H1 (cell line): ENCODE measurements at regions of chr3 and their contacts with region 1.

Region 1: GRCh38 chr3:46923559-46924350 is 46.2 kb downstream of the PTH1R start:
- DNase-seq: peak in 1 of 2 experiments; percentile 75
- H3K4me3 ChIP-seq: no peak overlapping the region
- H3K27ac ChIP-seq: no peak overlapping the region; the same call in 1 of the 2 replicates
- H3K4me1 ChIP-seq: no peaks in the 10 kb centered on the region
- H3K27me3 ChIP-seq: no peaks in the 10 kb centered on the region
- CTCF ChIP-seq: peak; percentile 65 to 79 (median 72)
- EP300 ChIP-seq: no peak
- POLR2A ChIP-seq: no peak
- RAD21 ChIP-seq: peak; percentile 74 to 77

Region 2: GRCh38 chr3:46935168-46935858 is 11.6 kb after region 1 on chr3:
- CTCF ChIA-PET with region 1: interaction called, 99 read pairs
- POLR2A ChIA-PET with region 1: interaction called, 4 read pairs
- DNase-seq: peak in 1 of 2 experiments; percentile 64
- H3K4me3 ChIP-seq: 0 out of 8 replicates have a peak overlapping the region, but pooled peaks of 1 of the 4 experiments have one; percentile 17
- H3K27ac ChIP-seq: peak overlapping the region; percentile 53; the same call in 1 of the 2 replicates
- H3K4me1 ChIP-seq: peaks cover 4 to 14% (median 10%) of the 10 kb centered on the region in 4 experiments; a peak in 6 of 7 replicates
- H3K27me3 ChIP-seq: no peaks in the 10 kb centered on the region
- CTCF ChIP-seq: peak; percentile 52 to 72 (median 60)
- EP300 ChIP-seq: no peak
- POLR2A ChIP-seq: no peak
- RAD21 ChIP-seq: peak; percentile 40 to 47

Region 3: GRCh38 chr3:46970391-46971091 is 46.8 kb after region 1 on chr3:
- CTCF ChIA-PET with region 1: interaction called, 15 read pairs
- POLR2A ChIA-PET with region 1: interaction called, 8 read pairs
- DNase-seq: no peak
- H3K4me3 ChIP-seq: no peak overlapping the region
- H3K27ac ChIP-seq: no peak overlapping the region
- H3K4me1 ChIP-seq: 0 out of 7 replicates have a peak, but pooled peaks cover 0 to 2% (median 0%) of the 10 kb centered on the region in 4 experiments
- H3K27me3 ChIP-seq: no peaks in the 10 kb centered on the region
- CTCF ChIP-seq: no peak
- EP300 ChIP-seq: no peak
- POLR2A ChIP-seq: no peak
- RAD21 ChIP-seq: no peak

Region 4: GRCh38 chr3:46981932-46982471 is 58.2 kb after region 1 on chr3:
- CTCF ChIA-PET with region 1: interaction called, 15 read pairs
- POLR2A ChIA-PET with region 1: no interaction called
- DNase-seq: no peak
- H3K4me3 ChIP-seq: peak overlapping the region in 3 of 4 experiments; percentile 3 to 22 (median 7); a peak in 3 of 8 replicates
- H3K27ac ChIP-seq: no peak overlapping the region
- H3K4me1 ChIP-seq: peaks cover 3 to 27% (median 17%) of the 10 kb centered on the region in 4 experiments
- H3K27me3 ChIP-seq: peaks cover 0 to 13% (median 3%) of the 10 kb centered on the region in 4 experiments; a peak in 3 of 7 replicates
- CTCF ChIP-seq: no peak
- EP300 ChIP-seq: peak in 1 of 2 experiments; percentile 65; a peak in 1 of 3 replicates
- POLR2A ChIP-seq: no peak
- RAD21 ChIP-seq: peak in 1 of 2 experiments; percentile 2; a peak in 1 of 4 replicates

Region 5: GRCh38 chr3:47227678-47228077 is 303.9 kb after region 1 on chr3:
- CTCF ChIA-PET with region 1: no interaction called
- POLR2A ChIA-PET with region 1: no interaction called
- DNase-seq: no peak
- H3K4me3 ChIP-seq: no peak overlapping the region
- H3K27ac ChIP-seq: no peak overlapping the region
- H3K4me1 ChIP-seq: peaks cover 0 to 4% (median 0%) of the 10 kb centered on the region in 4 experiments; a peak in 1 of 7 replicates
- H3K27me3 ChIP-seq: no peaks in the 10 kb centered on the region
- CTCF ChIP-seq: no peak
- EP300 ChIP-seq: no peak
- POLR2A ChIP-seq: no peak
- RAD21 ChIP-seq: no peak

Region 6: DNA sequence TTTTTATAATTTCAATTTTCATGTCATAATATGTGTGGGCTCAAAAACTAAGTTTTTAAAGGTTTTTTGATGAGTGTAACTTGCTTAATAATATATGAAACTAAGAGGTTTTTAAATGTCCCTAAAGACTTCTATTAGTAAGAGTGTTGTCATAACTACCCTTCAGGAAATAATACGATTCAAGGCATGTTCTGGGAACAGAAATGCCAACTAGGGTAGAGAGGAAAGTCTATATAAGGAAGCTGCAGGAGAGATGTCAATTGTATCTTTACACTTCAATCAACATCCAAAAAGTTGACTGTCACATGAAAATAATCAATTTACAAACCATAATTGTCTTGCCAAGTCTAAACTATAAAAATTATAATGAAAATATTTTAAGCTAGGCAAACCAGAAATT is 781.6 kb after region 1 on chr3:
- CTCF ChIA-PET with region 1: no interaction called
- POLR2A ChIA-PET with region 1: no interaction called
- DNase-seq: no peak
- H3K4me3 ChIP-seq: no peak overlapping the region
- H3K27ac ChIP-seq: no peak overlapping the region
- H3K4me1 ChIP-seq: no peaks in the 10 kb centered on the region
- H3K27me3 ChIP-seq: no peaks in the 10 kb centered on the region
- CTCF ChIP-seq: no peak
- EP300 ChIP-seq: no peak
- POLR2A ChIP-seq: no peak
- RAD21 ChIP-seq: no peak